Mammary epithelial cell (primary cell): ENCODE measurements at regions of chr7 and their contacts with region 1.

Region 1: DNA sequence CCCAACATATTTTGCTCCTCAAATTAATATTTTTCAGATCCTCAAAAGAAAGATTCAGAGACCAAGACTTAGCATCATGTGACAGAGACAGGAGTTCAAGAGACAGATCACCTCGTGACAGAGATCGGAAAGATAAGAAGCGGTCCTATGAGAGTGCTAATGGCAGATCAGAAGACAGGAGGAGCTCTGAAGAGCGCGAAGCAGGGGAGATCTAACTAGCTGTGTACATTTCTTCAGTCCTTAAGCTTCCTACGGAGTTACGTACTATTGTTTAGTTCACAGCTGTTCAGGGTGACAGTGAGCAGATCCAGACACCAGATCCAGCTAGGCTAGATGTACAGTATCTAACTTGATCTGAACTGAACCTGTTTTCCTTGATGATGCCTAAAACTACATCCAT is 61.3 kb downstream of the KLRG2 start:
- DNase-seq: no peak
- H3K4me3 ChIP-seq: no peak overlapping the region
- H3K27ac ChIP-seq: no peak overlapping the region
- H3K4me1 ChIP-seq: peaks cover 7% of the 10 kb centered on the region
- H3K27me3 ChIP-seq: no peaks in the 10 kb centered on the region
- CTCF ChIP-seq: no peak

Region 2: GRCh38 chr7:139370301-139370942 is 51.7 kb before region 1 on chr7:
- CTCF ChIA-PET with region 1: no interaction called
- dilution Hi-C with region 1: loop called (anchors 5 kb)
- in situ Hi-C with region 1: no loop called
- intact Hi-C with region 1: no loop called
- DNase-seq: no peak
- H3K4me3 ChIP-seq: no peak overlapping the region
- H3K27ac ChIP-seq: no peak overlapping the region
- H3K4me1 ChIP-seq: no peaks in the 10 kb centered on the region
- H3K27me3 ChIP-seq: no peaks in the 10 kb centered on the region
- CTCF ChIP-seq: no peak